GM12878 (cell line): ENCODE measurements at regions of chr5 and their contacts with region 1.

Region 1: DNA sequence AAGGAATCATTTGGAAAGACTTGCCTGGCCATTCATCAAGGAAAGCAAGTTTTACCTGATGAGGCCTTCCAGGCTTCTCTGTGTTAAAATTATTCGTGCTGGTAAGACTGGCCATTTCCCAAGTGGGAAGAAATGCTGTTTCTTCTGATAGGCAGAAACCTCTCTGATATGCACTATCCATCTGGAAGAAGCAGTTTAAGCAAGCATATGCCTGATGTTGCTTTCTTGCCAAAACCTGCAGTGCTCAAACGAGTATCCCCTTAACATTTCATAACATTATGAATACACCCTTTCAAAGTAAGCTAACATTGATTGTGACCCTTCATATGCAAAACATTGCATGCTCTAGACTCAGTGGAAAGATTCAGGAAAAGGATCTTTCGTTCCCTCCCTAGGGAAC is 36.0 kb upstream of the PRLR start:
- DNase-seq: no peak
- ATAC-seq: no peak
- H3K4me3 ChIP-seq: no peak overlapping the region
- H3K27ac ChIP-seq: no peak overlapping the region
- H3K4me1 ChIP-seq: no peaks in the 10 kb centered on the region
- H3K27me3 ChIP-seq: no peaks in the 10 kb centered on the region
- CTCF ChIP-seq: no peak
- EP300 ChIP-seq: no peak
- POLR2A ChIP-seq: no peak
- RAD21 ChIP-seq: no peak

Region 2: DNA sequence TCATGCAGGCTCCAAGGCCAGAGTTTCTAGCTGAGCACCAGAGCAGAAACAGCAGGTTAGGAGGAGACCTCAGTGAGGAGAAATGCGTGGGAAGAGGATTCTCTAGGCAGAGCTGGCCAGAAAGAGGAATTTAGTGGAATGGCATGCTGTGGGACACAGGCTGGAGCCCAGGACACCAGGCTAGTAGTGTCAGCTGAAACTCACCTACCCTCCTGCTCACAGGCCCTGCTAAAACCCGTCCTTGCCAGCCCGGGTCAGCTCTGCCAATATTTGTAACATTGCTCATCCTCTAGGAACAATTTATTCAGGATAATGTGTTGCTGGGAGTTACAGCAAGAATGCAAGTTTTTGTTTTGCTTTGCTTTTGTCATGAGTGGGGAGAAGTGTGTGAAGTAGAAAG is 178.3 kb before region 1 on chr5:
- CTCF ChIA-PET with region 1: no interaction called
- POLR2A ChIA-PET with region 1: no interaction called
- RAD21 ChIA-PET with region 1: no interaction called
- SMC1A ChIA-PET with region 1: no interaction called
- in situ Hi-C with region 1: no loop called
- intact Hi-C with region 1: no loop called
- DNase-seq: no peak
- ATAC-seq: no peak
- H3K4me3 ChIP-seq: no peak overlapping the region
- H3K27ac ChIP-seq: no peak overlapping the region
- H3K4me1 ChIP-seq: no peaks in the 10 kb centered on the region
- H3K27me3 ChIP-seq: no peaks in the 10 kb centered on the region
- CTCF ChIP-seq: no peak
- EP300 ChIP-seq: no peak
- POLR2A ChIP-seq: no peak
- RAD21 ChIP-seq: no peak

Region 3: GRCh38 chr5:35151146-35151920 is 114.9 kb before region 1 on chr5:
- CTCF ChIA-PET with region 1: no interaction called
- POLR2A ChIA-PET with region 1: no interaction called
- RAD21 ChIA-PET with region 1: no interaction called
- SMC1A ChIA-PET with region 1: no interaction called
- in situ Hi-C with region 1: no loop called
- intact Hi-C with region 1: no loop called
- DNase-seq: no peak
- ATAC-seq: peak; percentile 53
- H3K4me3 ChIP-seq: no peak overlapping the region
- H3K27ac ChIP-seq: no peak overlapping the region
- H3K4me1 ChIP-seq: no peaks in the 10 kb centered on the region
- H3K27me3 ChIP-seq: no peaks in the 10 kb centered on the region
- CTCF ChIP-seq: no peak
- EP300 ChIP-seq: no peak
- POLR2A ChIP-seq: no peak
- RAD21 ChIP-seq: no peak

Region 4: DNA sequence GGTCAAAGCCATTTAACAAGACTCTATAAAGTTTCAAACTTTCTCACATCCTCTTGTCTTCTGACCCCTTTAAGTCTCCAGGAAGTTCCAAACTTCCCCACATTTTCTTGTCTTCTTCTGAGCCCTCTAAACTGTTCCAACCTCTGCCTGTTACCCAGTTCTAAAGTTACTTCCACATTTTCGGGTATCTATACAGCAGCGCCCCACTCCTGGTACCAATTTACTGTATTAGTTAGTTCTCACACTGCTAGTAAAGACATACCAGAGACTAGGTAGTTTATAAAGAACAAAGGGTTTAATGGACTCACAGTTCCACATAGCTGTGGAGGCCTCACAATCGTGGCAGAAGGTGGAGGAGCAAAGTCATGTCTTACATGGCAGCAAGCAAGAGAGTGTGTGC is 12.7 kb before region 1 on chr5:
- CTCF ChIA-PET with region 1: interaction called, 5 read pairs
- POLR2A ChIA-PET with region 1: interaction called, 4 read pairs
- RAD21 ChIA-PET with region 1: interaction called, 13 read pairs
- SMC1A ChIA-PET with region 1: interaction called, 39 read pairs
- in situ Hi-C with region 1: no loop called
- intact Hi-C with region 1: no loop called
- DNase-seq: no peak
- ATAC-seq: no peak
- H3K4me3 ChIP-seq: no peak overlapping the region
- H3K27ac ChIP-seq: no peak overlapping the region
- H3K4me1 ChIP-seq: no peaks in the 10 kb centered on the region
- H3K27me3 ChIP-seq: no peaks in the 10 kb centered on the region
- CTCF ChIP-seq: no peak
- EP300 ChIP-seq: no peak
- POLR2A ChIP-seq: no peak
- RAD21 ChIP-seq: no peak

Region 5: GRCh38 chr5:35281613-35282012 is 15.3 kb after region 1 on chr5:
- CTCF ChIA-PET with region 1: no interaction called
- POLR2A ChIA-PET with region 1: interaction called, 4 read pairs
- RAD21 ChIA-PET with region 1: no interaction called
- SMC1A ChIA-PET with region 1: interaction called, 10 read pairs
- in situ Hi-C with region 1: no loop called
- intact Hi-C with region 1: no loop called
- DNase-seq: no peak
- ATAC-seq: no peak
- H3K4me3 ChIP-seq: no peak overlapping the region
- H3K27ac ChIP-seq: no peak overlapping the region
- H3K4me1 ChIP-seq: no peaks in the 10 kb centered on the region
- H3K27me3 ChIP-seq: no peaks in the 10 kb centered on the region
- CTCF ChIP-seq: no peak
- EP300 ChIP-seq: no peak
- POLR2A ChIP-seq: no peak
- RAD21 ChIP-seq: no peak